ENCODE measurements at regions of chr16 and their contacts with region 1.

Region 1: GRCh38 chr16:67480833-67481560 is at the start of gene ATP6V0D1:
- DNase-seq: peak; percentile 99
- H3K4me3 Mint-ChIP-seq: peak within 1 kb of the TSS; percentile 100
- H3K27ac Mint-ChIP-seq: peak within 1 kb of the TSS; percentile 99
- H3K4me1 Mint-ChIP-seq: peaks cover 42% of the 10 kb centered on the region
- H3K27me3 Mint-ChIP-seq: no peaks in the 10 kb centered on the region
- total RNA-seq, gene ATP6V0D1: 11.9 to 15.3 TPM

Region 2: GRCh38 chr16:67461600-67462592 is 19.1 kb before region 1 on chr16:
- CTCF ChIA-PET with region 1: interaction called, 10 read pairs
- intact Hi-C with region 1: no loop called
- DNase-seq: no peak
- H3K4me3 Mint-ChIP-seq: no peak overlapping the region
- H3K27ac Mint-ChIP-seq: no peak overlapping the region
- H3K4me1 Mint-ChIP-seq: peaks cover 14% of the 10 kb centered on the region
- H3K27me3 Mint-ChIP-seq: no peaks in the 10 kb centered on the region

Region 3: DNA sequence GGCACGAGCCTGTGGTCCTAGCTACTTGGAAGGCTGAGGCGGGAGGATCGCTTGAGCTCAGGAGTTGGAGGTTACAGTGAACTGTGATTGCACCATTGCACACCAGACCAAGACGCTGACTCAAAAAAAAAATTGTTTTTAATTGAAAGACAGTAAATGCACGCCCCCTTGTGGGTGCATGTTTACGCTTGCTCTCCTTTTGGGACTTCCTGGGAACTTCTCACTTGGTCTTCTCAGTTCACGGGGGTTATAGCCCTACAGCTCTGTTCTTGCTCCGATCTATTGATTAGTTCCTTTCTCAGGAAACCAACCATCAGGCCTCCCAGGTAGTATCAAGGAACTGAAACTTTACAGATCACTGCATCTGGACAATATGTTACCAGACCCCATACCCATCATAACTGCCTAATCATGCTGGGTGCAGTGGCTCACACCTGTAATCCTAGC is 33.4 kb after region 1 on chr16:
- CTCF ChIA-PET with region 1: interaction called, 69 read pairs
- intact Hi-C with region 1: loop called (anchors 1 kb)
- DNase-seq: peak; percentile 95
- H3K4me3 Mint-ChIP-seq: no peak overlapping the region
- H3K27ac Mint-ChIP-seq: peak overlapping the region; percentile 77
- H3K4me1 Mint-ChIP-seq: peaks cover 6% of the 10 kb centered on the region
- H3K27me3 Mint-ChIP-seq: no peaks in the 10 kb centered on the region

Region 4: DNA sequence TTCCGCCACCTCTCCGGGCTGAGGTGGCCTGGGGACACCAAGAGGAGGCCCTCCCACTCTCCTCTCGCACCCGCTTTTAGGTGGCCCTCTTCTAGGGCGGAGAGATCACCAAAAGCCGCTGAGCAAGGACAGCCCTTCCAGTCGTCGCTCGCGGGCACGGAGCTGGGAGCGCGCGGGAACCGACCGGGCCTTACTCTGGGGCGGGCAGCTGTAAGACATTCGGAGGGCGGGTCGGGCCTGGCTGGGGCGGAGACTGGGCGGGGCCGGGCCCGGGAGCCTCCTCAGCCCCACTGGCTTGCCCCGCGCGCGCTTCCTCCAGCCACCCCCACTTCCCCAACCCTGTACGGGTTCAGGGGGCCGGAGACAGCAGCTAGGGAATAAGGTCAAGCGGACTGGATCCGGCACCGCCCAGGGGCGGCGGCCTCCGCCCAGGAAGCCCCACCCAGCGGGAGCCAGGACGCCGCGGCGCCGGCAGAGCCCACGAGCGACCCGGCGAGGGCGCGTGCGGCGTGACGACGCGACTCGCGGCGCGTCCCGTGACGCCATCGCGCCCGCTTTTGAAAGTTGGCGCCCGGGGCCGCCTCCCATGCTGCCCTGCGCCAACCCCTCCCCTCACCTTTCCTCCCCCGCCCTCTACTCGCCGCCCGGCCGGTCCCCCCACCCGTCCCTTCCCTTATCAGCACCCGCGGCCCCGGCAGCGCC is 81.0 kb after region 1 on chr16:
- CTCF ChIA-PET with region 1: no interaction called
- intact Hi-C with region 1: loop called (anchors 1 kb)
- DNase-seq: peak; percentile 98
- H3K4me3 Mint-ChIP-seq: peak overlapping the region; percentile 78
- H3K27ac Mint-ChIP-seq: peak overlapping the region; percentile 86
- H3K4me1 Mint-ChIP-seq: peaks cover 45% of the 10 kb centered on the region
- H3K27me3 Mint-ChIP-seq: no peaks in the 10 kb centered on the region

Region 5: DNA sequence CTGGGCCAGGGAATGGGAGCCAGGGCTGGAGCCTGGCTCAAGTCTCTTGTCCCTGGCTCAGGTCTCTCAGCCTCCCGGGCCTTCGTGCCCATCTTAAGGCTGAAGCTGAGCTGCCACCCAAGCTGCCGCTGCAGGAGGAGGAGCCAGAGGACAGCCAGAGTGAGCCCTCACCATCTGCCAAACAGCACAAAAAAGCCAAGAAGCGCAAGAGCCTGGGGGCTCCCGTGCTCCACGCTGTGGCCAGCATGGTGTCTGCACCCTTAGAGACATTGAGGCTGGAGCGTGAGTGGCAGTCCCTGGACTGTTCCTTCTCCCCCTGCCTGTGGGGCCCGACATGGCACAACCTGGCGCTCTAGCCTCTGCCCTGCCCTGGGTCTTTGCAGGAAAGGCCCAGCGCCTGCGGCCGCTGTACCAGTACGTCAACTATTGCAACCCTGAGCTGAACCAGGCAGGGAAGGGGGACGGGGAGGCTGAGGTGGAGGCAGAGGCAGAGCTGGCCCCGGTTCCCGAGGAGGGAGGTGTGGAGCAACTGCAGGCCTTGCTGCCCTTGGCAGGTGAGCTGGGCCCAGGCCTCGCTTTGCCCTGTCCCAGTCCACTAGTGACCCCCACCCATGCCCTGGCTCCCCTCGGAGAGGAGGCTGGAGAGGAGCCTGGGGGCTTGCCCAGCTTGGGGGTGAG is 187.0 kb after region 1 on chr16:
- CTCF ChIA-PET with region 1: no interaction called
- intact Hi-C with region 1: loop called (anchors 1 kb)
- DNase-seq: peak; percentile 91
- H3K4me3 Mint-ChIP-seq: peak overlapping the region; percentile 90
- H3K27ac Mint-ChIP-seq: no peak overlapping the region
- H3K4me1 Mint-ChIP-seq: peaks cover 17% of the 10 kb centered on the region
- H3K27me3 Mint-ChIP-seq: no peaks in the 10 kb centered on the region

Region 6: GRCh38 chr16:67910158-67910557 is 429.2 kb after region 1 on chr16:
- CTCF ChIA-PET with region 1: no interaction called
- intact Hi-C with region 1: no loop called
- DNase-seq: peak; percentile 83
- H3K4me3 Mint-ChIP-seq: no peak overlapping the region
- H3K27ac Mint-ChIP-seq: peak overlapping the region; percentile 56
- H3K4me1 Mint-ChIP-seq: peaks cover 21% of the 10 kb centered on the region
- H3K27me3 Mint-ChIP-seq: no peaks in the 10 kb centered on the region